ENCODE measurements at regions of chr4 and their contacts with region 1.

Region 1: GRCh38 chr4:66639361-66639760 is 905.9 kb downstream of the CENPC start:
- DNase-seq: peak; percentile 80
- ATAC-seq: peak; percentile 90
- H3K4me3 ChIP-seq: no peak overlapping the region
- H3K27ac ChIP-seq: no peak overlapping the region
- H3K4me1 ChIP-seq: peaks cover 9% of the 10 kb centered on the region
- H3K27me3 ChIP-seq: no peaks in the 10 kb centered on the region
- CTCF ChIP-seq: no peak

Region 2: GRCh38 chr4:66524781-66525180 is 114.6 kb before region 1 on chr4:
- CTCF ChIA-PET with region 1: no interaction called
- POLR2A ChIA-PET with region 1: no interaction called
- intact Hi-C with region 1: loop called (anchors 5 kb)
- DNase-seq: no peak
- ATAC-seq: no peak
- H3K4me3 ChIP-seq: no peak overlapping the region
- H3K27ac ChIP-seq: no peak overlapping the region
- H3K4me1 ChIP-seq: no peaks in the 10 kb centered on the region
- H3K27me3 ChIP-seq: no peaks in the 10 kb centered on the region
- CTCF ChIP-seq: no peak

Measured in PC-3 (cell line).